ENCODE measurements at regions of chr18 and their contacts with region 1.

Region 1: GRCh38 chr18:45384137-45384961 is 230.9 kb upstream of the SLC14A2 start:
- DNase-seq: peak; percentile 29 to 62
- ATAC-seq: peak; percentile 70 to 91 (median 88)
- H3K4me3 ChIP-seq: no peak overlapping the region
- H3K27ac ChIP-seq: no peak overlapping the region
- H3K4me1 ChIP-seq: peaks cover 7% of the 10 kb centered on the region
- H3K27me3 ChIP-seq: no peaks in the 10 kb centered on the region
- CTCF ChIP-seq: peak; percentile 79

Region 2: DNA sequence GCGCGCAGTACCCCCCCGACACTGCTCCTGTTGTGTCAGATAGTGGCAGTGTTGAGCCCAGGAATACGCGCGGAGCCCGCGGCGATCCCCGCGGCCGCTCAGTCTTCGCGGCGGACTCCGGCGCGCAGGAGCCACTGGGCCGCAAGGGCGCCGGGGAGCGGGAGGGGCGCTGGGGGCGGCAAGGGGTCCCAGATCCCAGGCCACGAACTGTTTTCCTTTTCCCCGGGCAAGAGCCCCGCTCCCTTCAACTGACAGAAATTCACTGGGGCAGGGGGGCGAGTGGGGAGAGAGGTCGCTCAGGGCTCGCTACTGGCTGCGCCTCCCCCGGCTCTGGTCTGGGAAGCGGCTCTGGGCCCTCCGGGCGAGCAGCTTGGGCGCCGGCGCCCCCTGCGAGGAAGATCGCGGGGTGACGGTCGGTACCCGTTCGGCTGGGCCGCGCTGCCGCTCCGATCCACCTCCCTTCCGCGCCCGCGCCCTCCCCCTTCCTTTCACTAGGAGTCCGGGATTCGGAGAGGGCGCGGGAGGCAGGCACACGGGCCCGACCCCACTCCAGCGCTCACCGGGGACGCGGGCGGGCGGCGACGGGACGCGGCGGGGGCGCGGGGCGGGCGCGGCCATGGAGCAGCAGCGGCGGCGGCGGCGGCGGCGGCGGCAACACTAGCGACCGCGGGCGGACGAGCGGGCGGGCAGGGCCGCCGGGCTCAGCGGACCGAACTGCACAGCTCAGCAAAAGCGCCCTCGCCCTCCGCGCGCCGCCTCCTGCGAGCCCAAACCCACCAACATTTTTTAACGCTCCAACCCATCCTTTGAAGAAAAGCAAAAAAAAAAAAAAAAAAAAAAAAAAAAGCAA is 705.1 kb before region 1 on chr18:
- intact Hi-C with region 1: loop called (anchors 10 kb)
- DNase-seq: peak; percentile 88 to 92
- ATAC-seq: peak; percentile 92 to 94 (median 93)
- H3K4me3 ChIP-seq: peak overlapping the region; percentile 78
- H3K27ac ChIP-seq: peak overlapping the region; percentile 95
- H3K4me1 ChIP-seq: peaks cover 9% of the 10 kb centered on the region
- H3K27me3 ChIP-seq: no peaks in the 10 kb centered on the region
- CTCF ChIP-seq: peak; percentile 62

Region 3: GRCh38 chr18:45212181-45213039 is 171.9 kb before region 1 on chr18:
- intact Hi-C with region 1: loop called in 1 of 2 experiments (anchors 10 kb)
- DNase-seq: peak; percentile 74 to 87
- ATAC-seq: peak; percentile 93 to 100 (median 100)
- H3K4me3 ChIP-seq: no peak overlapping the region
- H3K27ac ChIP-seq: no peak overlapping the region
- H3K4me1 ChIP-seq: no peaks in the 10 kb centered on the region
- H3K27me3 ChIP-seq: no peaks in the 10 kb centered on the region
- CTCF ChIP-seq: peak; percentile 93

Region 4: GRCh38 chr18:45324495-45325113 is 59.7 kb before region 1 on chr18:
- intact Hi-C with region 1: loop called in 1 of 2 experiments (anchors 5 kb)
- DNase-seq: peak; percentile 88 to 92
- ATAC-seq: peak; percentile 83 to 87 (median 86)
- H3K4me3 ChIP-seq: peak overlapping the region; percentile 59
- H3K27ac ChIP-seq: peak overlapping the region; percentile 91
- H3K4me1 ChIP-seq: peaks cover 83% of the 10 kb centered on the region
- H3K27me3 ChIP-seq: no peaks in the 10 kb centered on the region
- CTCF ChIP-seq: no peak

Region 5: GRCh38 chr18:45670281-45670962 is 286.1 kb after region 1 on chr18:
- intact Hi-C with region 1: no loop called
- DNase-seq: peak in 1 of 2 donors; percentile 28
- ATAC-seq: no peak
- H3K4me3 ChIP-seq: no peak overlapping the region
- H3K27ac ChIP-seq: no peak overlapping the region
- H3K4me1 ChIP-seq: peaks cover 11% of the 10 kb centered on the region
- H3K27me3 ChIP-seq: peaks cover 0 to 3% (median 0%) of the 10 kb centered on the region in 3 donors
- CTCF ChIP-seq: no peak